A549 (cell line): ENCODE measurements at regions of chr10 and their contacts with region 1.

Region 1: GRCh38 chr10:91298224-91298871 is 77.9 kb downstream of the PCGF5 start:
- DNase-seq: peak; percentile 68 to 78
- ATAC-seq: peak; percentile 91 to 96
- H3K4me3 ChIP-seq: 0 out of 3 replicates have a peak overlapping the region, but pooled peaks have one; percentile 14
- H3K27ac ChIP-seq: peak overlapping the region; percentile 28 to 64; a peak in 5 of 6 replicates
- H3K4me1 ChIP-seq: peaks cover 7% of the 10 kb centered on the region; the same call in 1 of the 3 replicates
- CTCF ChIP-seq: peak; percentile 94
- EP300 ChIP-seq: no peak
- POLR2A ChIP-seq: no peak
- RAD21 ChIP-seq: peak; percentile 94 to 95

Region 2: GRCh38 chr10:91287276-91287675 is 11.1 kb before region 1 on chr10:
- CTCF ChIA-PET with region 1: interaction called, 38 read pairs
- POLR2A ChIA-PET with region 1: no interaction called
- DNase-seq: no peak
- ATAC-seq: no peak
- H3K4me3 ChIP-seq: no peak overlapping the region
- H3K27ac ChIP-seq: no peak overlapping the region
- H3K4me1 ChIP-seq: no peaks in the 10 kb centered on the region
- CTCF ChIP-seq: no peak
- EP300 ChIP-seq: no peak
- POLR2A ChIP-seq: no peak
- RAD21 ChIP-seq: no peak

Region 3: DNA sequence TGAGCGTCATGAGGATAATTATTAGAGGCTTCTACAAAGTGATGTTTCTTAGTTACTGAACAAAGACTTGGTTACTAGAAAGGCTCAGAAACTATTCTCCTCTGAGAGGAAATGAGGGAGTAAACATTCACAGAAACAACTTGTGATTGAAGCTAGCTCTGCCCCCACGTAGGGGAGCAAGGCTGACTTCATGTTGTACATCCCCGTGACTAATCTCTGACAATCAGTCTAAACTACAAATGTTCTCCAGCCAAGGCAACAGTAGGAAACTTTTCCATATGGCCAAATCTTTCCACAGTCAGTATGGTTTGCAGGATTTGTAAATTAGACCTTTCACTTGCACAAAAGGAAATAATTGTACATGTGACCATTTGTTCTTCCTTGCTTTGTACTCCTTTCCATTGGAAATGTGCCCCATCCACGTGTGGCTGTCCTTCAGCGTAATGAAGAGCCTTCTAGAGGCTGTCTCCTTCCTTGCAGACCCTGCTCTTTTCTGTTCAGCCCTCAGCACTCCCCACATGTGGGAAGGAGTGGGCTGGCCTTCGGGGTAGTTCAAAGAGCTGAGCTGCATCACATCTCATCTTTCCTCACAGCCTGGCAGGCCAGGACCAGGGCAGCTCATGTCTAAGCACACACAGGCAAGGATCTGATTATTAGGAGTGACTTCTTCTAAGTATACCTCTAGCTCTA is 15.6 kb after region 1 on chr10:
- CTCF ChIA-PET with region 1: interaction called, 94 read pairs
- POLR2A ChIA-PET with region 1: no interaction called
- DNase-seq: no peak
- ATAC-seq: no peak
- H3K4me3 ChIP-seq: no peak overlapping the region
- H3K27ac ChIP-seq: no peak overlapping the region
- H3K4me1 ChIP-seq: no peaks in the 10 kb centered on the region
- CTCF ChIP-seq: no peak
- EP300 ChIP-seq: no peak
- POLR2A ChIP-seq: no peak
- RAD21 ChIP-seq: no peak

Region 4: DNA sequence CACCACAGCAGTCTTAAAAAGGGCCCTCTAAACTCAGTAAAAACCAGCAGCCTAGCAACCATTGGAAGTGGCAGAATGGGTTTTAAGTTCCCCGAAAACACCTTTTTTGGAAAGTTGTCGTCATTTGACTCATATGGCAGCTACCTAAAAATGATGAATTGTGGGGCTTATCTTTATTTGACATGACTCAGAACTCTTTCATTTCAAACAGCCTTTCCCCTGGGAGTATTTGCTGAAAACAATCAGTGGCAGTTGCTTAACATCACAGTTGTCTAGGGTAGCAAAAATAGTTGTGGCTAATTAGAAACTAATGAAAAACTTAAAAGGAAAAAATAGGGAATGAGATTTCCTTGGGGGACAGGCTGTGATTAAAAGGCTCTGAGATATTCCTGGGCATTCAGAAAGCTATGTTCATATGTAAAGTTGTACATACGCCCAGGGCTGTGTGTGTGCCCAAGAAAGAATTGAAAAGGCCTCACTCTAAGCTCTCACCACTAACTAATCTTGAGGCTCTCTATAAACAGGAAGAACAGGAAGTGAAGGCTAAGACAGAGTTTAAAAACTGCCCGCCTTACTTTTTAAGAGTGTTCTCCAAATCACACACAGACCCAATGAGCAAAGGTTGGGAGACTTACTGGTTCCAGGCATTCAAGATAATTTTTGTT is 30.1 kb after region 1 on chr10:
- CTCF ChIA-PET with region 1: no interaction called
- POLR2A ChIA-PET with region 1: no interaction called
- DNase-seq: no peak
- ATAC-seq: no peak
- H3K4me3 ChIP-seq: no peak overlapping the region
- H3K27ac ChIP-seq: no peak overlapping the region
- H3K4me1 ChIP-seq: no peaks in the 10 kb centered on the region
- CTCF ChIP-seq: no peak
- EP300 ChIP-seq: no peak
- POLR2A ChIP-seq: no peak
- RAD21 ChIP-seq: no peak

Region 5: DNA sequence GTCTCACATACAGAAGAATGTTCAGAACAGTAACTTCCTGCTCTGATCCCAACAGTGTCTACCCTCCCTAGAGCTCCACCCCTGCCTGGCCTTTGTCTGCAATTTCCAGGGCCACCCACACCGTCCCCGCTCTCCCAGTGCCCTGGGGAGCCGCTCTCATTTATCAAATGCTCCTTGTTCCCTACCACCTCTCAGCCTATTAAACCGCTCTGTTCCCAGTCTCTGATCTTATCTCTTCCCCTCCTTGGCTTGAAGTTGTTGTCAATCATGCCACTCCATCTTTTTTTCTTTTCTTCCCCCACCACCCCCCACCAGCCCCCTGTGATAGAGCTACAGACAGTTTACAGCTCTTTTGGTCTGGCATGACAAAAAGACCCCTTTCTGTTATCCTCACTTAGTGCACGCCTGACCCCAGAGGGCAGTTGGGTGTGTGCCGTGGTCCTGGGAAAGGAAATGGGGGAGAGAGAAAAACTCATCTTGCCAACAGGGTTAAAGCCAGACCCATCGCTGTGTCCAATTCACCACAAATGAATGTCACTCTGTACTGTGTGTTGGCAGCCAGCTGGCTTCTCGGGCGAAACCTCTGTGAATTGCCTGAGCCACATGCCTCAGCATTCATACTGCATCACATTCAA is 83.0 kb after region 1 on chr10:
- CTCF ChIA-PET with region 1: interaction called, 13 read pairs
- POLR2A ChIA-PET with region 1: no interaction called
- DNase-seq: no peak
- ATAC-seq: no peak
- H3K4me3 ChIP-seq: no peak overlapping the region
- H3K27ac ChIP-seq: no peak overlapping the region
- H3K4me1 ChIP-seq: no peaks in the 10 kb centered on the region
- CTCF ChIP-seq: no peak
- EP300 ChIP-seq: no peak
- POLR2A ChIP-seq: no peak
- RAD21 ChIP-seq: no peak

Region 6: DNA sequence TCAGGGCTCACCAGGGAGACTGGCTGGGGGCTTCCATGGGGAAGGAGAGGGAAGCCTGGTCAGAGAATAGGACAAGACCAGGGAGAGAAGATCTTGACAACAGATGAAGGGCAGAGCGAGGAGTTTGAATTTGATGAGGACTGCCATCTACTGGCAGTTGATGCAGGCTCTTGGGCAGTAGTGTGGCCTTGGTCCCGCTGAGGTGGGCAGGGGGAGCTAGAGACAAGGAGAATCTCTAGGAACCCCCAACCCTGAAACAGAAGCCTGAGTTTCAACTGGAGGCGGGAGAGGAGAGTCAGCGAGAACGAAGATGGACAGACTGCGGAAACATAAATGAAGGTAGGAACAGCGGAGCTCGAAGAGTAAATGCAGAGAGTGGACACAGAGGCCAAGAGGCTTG is 253.5 kb after region 1 on chr10:
- CTCF ChIA-PET with region 1: interaction called, 10 read pairs
- POLR2A ChIA-PET with region 1: no interaction called
- DNase-seq: peak; percentile 35 to 76
- ATAC-seq: peak; percentile 79 to 96
- H3K4me3 ChIP-seq: no peak overlapping the region
- H3K27ac ChIP-seq: peak overlapping the region in 1 of 2 experiments; percentile 39; a peak in 1 of 6 replicates
- H3K4me1 ChIP-seq: peaks cover 10% of the 10 kb centered on the region
- CTCF ChIP-seq: peak; percentile 68
- EP300 ChIP-seq: no peak
- POLR2A ChIP-seq: no peak
- RAD21 ChIP-seq: peak; percentile 80 to 83

Region 7: DNA sequence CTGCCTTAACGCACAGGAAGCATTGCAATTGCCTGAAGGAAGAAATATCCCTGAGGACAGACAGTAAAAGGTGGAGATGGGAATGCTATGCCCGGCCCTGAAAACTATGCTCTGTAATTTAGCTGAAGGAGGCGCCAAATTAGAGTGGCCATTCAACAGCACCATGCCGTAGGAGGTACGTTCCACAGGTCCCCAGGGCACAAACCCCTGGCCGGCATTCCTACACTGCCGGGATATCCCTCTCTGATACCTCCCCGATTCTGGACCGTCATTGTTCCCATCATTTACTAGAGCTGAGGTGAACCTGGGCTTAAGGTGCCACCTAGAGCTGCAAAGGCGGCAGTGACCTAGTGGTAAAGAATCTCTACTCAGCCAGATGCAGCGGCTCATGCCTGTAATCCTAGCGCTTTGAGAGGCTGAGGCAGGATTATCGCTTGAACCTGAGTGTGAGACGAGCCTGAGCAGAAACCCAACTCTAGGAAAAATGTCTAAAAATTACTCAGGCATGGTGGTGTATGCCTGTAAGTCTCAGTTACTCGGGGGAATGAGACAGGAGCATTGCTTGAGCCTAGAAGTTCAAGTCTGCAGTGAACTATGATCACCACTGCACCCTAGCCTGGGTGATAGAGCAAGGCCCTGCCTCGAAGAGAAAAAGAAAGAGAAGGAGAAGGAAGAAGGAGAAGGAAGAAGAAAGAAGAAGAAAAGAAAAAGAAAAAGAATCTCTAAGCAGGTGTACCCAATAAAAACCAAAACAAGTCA is 446.9 kb after region 1 on chr10:
- CTCF ChIA-PET with region 1: interaction called, 10 read pairs
- POLR2A ChIA-PET with region 1: no interaction called
- DNase-seq: peak; percentile 22 to 72
- ATAC-seq: peak; percentile 99 to 100
- H3K4me3 ChIP-seq: peak overlapping the region; percentile 28; the same call in 2 of the 3 replicates
- H3K27ac ChIP-seq: peak overlapping the region; percentile 43 to 61; a peak in 5 of 6 replicates
- H3K4me1 ChIP-seq: peaks cover 5% of the 10 kb centered on the region; the same call in 1 of the 3 replicates
- CTCF ChIP-seq: peak; percentile 65
- EP300 ChIP-seq: no peak
- POLR2A ChIP-seq: no peak
- RAD21 ChIP-seq: peak; percentile 88 to 90

Region 8: GRCh38 chr10:91908337-91909116 is 610.2 kb after region 1 on chr10:
- CTCF ChIA-PET with region 1: interaction called, 18 read pairs
- POLR2A ChIA-PET with region 1: interaction called, 3 read pairs
- DNase-seq: peak; percentile 89 to 92
- ATAC-seq: peak; percentile 95 to 96
- H3K4me3 ChIP-seq: peak overlapping the region; percentile 81
- H3K27ac ChIP-seq: peak overlapping the region; percentile 89 to 92
- H3K4me1 ChIP-seq: peaks cover 14% of the 10 kb centered on the region; the same call in 1 of the 3 replicates
- CTCF ChIP-seq: peak; percentile 69
- EP300 ChIP-seq: no peak
- POLR2A ChIP-seq: peak; percentile 48
- RAD21 ChIP-seq: peak; percentile 48 to 52; a peak in 4 of 5 replicates